ENCODE measurements at regions of chr14 and their contacts with region 1.

Region 1: DNA sequence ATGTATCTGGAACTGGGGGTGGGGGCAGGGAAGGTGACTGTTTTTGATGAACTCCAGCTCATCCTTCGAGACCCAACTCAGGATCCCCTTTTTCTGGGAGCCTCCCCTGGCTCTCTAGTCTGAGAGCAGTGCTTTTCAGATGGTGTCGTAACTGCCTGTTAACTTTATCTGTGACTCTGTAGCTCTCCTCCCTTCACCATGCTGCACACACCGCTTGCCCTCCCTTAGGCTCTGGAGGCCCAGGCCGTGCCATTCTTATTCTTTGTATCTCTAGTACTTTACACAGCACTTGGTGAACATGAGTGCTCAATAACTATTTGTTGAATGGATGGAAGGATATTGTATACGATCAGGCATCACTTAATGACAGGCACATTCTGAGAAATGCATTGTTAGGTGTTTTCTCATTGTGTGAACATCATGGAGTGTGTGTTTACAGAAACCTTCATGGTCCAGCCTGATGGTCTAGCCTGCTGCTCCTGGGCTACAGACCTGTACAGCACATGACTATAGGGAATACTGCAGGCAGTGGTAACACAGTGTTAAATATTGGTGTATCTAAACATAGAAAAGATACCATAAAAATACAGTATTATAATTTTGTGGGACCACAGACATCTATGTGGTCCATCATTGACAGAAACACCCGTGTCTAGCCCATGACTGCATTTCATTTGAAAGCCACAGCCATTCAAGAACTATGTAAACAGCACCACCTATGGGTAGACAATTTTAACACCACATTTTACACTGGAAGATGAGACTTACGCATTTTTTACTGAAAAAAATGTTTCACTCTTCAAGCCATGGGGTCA is 91.8 kb downstream of the EML1 start:
- DNase-seq: peak; percentile 68
- H3K4me3 ChIP-seq: no peak overlapping the region
- H3K27ac ChIP-seq: no peak overlapping the region
- H3K4me1 ChIP-seq: no peaks in the 10 kb centered on the region
- CTCF ChIP-seq: peak; percentile 95

Region 2: DNA sequence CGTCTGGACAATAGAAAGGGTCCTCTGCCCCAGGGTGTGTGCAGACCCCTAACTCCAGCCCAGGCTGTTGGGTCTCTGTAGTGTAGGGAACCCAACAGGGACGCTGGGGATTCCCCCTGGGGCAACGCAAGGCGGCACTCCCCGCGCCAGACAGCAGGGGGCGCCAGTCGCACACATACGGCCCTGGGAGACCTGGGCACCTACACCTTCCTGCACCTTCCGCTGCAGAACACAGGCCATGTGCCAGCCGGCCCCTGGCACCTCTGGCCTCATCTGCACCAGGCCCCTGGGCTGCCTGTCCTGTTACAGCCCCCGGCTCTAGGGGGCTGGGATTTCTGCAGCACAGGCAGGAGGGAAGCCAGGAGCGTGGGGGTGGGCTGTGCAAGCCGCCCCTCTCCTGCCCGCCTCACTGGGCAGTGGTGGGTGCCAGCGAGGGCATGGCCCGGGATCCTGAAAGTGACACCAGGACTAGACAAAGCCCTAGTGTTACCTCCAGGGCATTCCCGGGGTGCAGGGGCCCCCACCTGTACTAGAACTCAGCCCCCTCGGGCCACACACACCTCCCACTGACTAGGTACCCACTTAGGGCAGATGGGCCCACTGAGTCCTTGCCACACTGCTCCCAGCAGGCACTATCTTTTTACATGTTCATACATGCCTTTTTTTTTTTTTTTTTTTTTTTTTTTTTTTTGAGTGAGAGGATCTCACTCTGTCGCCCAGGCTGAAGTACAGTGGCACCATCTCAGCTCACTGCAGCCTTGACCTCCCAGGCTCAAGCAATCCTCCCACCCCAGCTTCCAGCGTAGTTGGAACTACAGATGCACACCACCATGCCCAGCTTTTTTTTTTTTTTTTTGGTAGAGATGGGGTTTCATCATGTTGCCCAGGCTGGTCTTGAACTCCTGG is 366.3 kb before region 1 on chr14:
- CTCF ChIA-PET with region 1: no interaction called
- POLR2A ChIA-PET with region 1: no interaction called
- intact Hi-C with region 1: loop called (anchors 1 kb)
- DNase-seq: peak; percentile 72
- H3K4me3 ChIP-seq: no peak overlapping the region
- H3K27ac ChIP-seq: no peak overlapping the region
- H3K4me1 ChIP-seq: no peaks in the 10 kb centered on the region
- CTCF ChIP-seq: peak; percentile 86

Region 3: GRCh38 chr14:99628832-99629618 is 256.0 kb before region 1 on chr14:
- CTCF ChIA-PET with region 1: no interaction called
- POLR2A ChIA-PET with region 1: no interaction called
- intact Hi-C with region 1: loop called (anchors 1 kb)
- DNase-seq: peak; percentile 66
- H3K4me3 ChIP-seq: no peak overlapping the region
- H3K27ac ChIP-seq: no peak overlapping the region
- H3K4me1 ChIP-seq: peaks cover 21% of the 10 kb centered on the region
- CTCF ChIP-seq: peak; percentile 95

Region 4: GRCh38 chr14:99729991-99730868 is 154.8 kb before region 1 on chr14:
- CTCF ChIA-PET with region 1: interaction called, 3 read pairs
- POLR2A ChIA-PET with region 1: no interaction called
- intact Hi-C with region 1: loop called (anchors 1 kb)
- DNase-seq: peak; percentile 54
- H3K4me3 ChIP-seq: no peak overlapping the region
- H3K27ac ChIP-seq: no peak overlapping the region
- H3K4me1 ChIP-seq: no peaks in the 10 kb centered on the region
- CTCF ChIP-seq: peak; percentile 84

Measured in OCI-LY7 (cell line).